Left lung (tissue), 14 donors: ENCODE measurements at regions of chr17 and their contacts with region 1.

Region 1: DNA sequence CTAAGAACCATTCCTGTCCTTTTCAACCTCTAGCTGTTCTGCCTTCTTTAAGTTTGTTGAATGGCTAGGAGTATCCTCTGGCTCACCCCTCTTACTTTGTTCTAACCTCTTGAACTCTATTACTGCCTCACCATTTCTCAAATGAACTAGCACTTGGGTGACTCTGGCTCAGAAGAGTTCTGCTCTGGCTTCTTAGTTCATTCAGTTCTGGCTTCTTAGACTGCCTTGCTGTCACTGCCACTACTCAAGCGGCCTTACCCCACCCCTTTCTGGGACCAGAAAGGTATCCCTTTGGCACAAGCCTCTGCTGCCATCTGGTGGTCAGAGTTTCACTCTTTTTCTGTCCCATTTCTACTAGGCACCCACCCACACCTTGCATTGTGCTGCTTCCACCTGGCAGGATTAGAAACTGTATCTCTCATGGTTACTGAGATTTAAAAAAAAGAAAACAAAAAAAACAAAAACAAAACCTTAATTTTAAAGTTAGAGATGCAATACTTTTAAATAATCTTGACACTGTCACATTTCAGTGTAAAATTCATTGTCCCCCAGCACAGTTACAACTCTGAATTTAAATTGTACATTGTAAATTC is 6.8 kb upstream of the ABCA10 start:
- DNase-seq: peak in 3 of 4 donors; percentile 62 to 84 (median 76)
- ATAC-seq: peak; percentile 98
- H3K4me3 ChIP-seq: no peak overlapping the region
- H3K27ac ChIP-seq: no peak overlapping the region
- H3K4me1 ChIP-seq: peaks cover 0 to 4% of the 10 kb centered on the region in 2 donors
- H3K27me3 ChIP-seq: no peaks in the 10 kb centered on the region
- CTCF ChIP-seq: peak; percentile 67 to 68

Region 2: DNA sequence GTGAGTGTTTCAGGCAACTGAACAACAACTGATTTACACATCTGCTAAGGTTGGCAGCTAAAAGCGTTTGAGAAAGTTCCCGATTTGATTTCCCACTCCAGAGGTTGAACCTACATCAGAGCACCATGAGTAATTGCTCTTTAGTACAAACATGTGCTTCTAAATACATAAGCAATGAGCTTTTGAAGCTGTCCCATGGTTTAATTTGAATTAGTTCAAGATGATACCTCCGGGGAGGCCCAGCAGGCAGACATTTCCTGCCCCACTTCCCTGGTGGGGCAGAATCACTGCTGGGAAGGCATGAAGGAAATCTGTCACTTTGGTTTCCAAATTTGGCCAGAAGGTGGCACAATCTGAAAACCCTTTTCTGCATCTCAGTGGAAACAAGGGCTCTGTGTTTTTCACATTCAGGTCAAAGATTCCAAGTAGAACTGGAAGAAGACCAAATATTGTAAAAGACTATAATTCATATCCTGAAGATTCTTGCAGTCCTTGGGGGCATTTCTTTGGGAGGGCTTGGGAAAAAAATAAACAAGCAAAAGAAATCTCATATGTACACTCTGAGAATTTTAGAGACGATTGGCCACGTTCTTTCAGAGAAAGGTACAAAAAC is 458.1 kb before region 1 on chr17:
- intact Hi-C with region 1: loop called in 1 of 2 experiments (anchors 5 kb)
- DNase-seq: peak in 2 of 4 donors; percentile 74 to 79
- ATAC-seq: peak; percentile 85
- H3K4me3 ChIP-seq: no peak overlapping the region
- H3K27ac ChIP-seq: no peak overlapping the region
- H3K4me1 ChIP-seq: peaks cover 0 to 14% of the 10 kb centered on the region in 2 donors
- H3K27me3 ChIP-seq: no peaks in the 10 kb centered on the region
- CTCF ChIP-seq: peak; percentile 63 to 66